Activated B cell treated with CpG ODN at 0.5 μM for 24 hours (primary cell): ENCODE measurements at regions of chr6 and their contacts with region 1.

Region 1: GRCh38 chr6:163705923-163706322 is 291.4 kb downstream of the QKI start:
- DNase-seq: no peak
- ATAC-seq: peak; percentile 53
- H3K4me3 Mint-ChIP-seq: peak overlapping the region; percentile 15
- H3K27ac Mint-ChIP-seq: peak overlapping the region; percentile 68
- H3K4me1 Mint-ChIP-seq: peaks cover 100% of the 10 kb centered on the region
- H3K27me3 Mint-ChIP-seq: no peaks in the 10 kb centered on the region
- CTCF ChIP-seq: no peak

Region 2: GRCh38 chr6:163719028-163719742 is 13.3 kb after region 1 on chr6:
- CTCF ChIA-PET with region 1: no interaction called
- POLR2A ChIA-PET with region 1: interaction called, 10 read pairs
- intact Hi-C with region 1: loop called (anchors 2 kb)
- DNase-seq: no peak
- ATAC-seq: no peak
- H3K4me3 Mint-ChIP-seq: no peak overlapping the region
- H3K27ac Mint-ChIP-seq: no peak overlapping the region
- H3K4me1 Mint-ChIP-seq: peaks cover 50% of the 10 kb centered on the region
- H3K27me3 Mint-ChIP-seq: no peaks in the 10 kb centered on the region
- CTCF ChIP-seq: no peak